Heart right ventricle (tissue), 16 donors: ENCODE measurements at regions of chr5 and their contacts with region 1.

Region 1: GRCh38 chr5:108606185-108606584 is 141.5 kb upstream of the FER start:
- DNase-seq: no peak
- ATAC-seq: no peak
- H3K4me3 ChIP-seq: no peak overlapping the region
- H3K27ac ChIP-seq: no peak overlapping the region
- H3K4me1 ChIP-seq: no peaks in the 10 kb centered on the region
- H3K27me3 ChIP-seq: no peaks in the 10 kb centered on the region
- CTCF ChIP-seq: no peak

Region 2: GRCh38 chr5:108409781-108410180 is 196.4 kb before region 1 on chr5:
- intact Hi-C with region 1: loop called in 1 of 10 experiments (anchors 5 kb)
- DNase-seq: no peak
- ATAC-seq: no peak
- H3K4me3 ChIP-seq: no peak overlapping the region
- H3K27ac ChIP-seq: no peak overlapping the region
- H3K4me1 ChIP-seq: no peaks in the 10 kb centered on the region
- H3K27me3 ChIP-seq: no peaks in the 10 kb centered on the region
- CTCF ChIP-seq: no peak

Region 3: GRCh38 chr5:108421713-108422112 is 184.5 kb before region 1 on chr5:
- intact Hi-C with region 1: no loop called
- DNase-seq: no peak
- ATAC-seq: no peak
- H3K4me3 ChIP-seq: no peak overlapping the region
- H3K27ac ChIP-seq: no peak overlapping the region
- H3K4me1 ChIP-seq: no peaks in the 10 kb centered on the region
- H3K27me3 ChIP-seq: no peaks in the 10 kb centered on the region
- CTCF ChIP-seq: no peak